Panc1 (cell line): ENCODE measurements at regions of chr7 and their contacts with region 1.

Region 1: DNA sequence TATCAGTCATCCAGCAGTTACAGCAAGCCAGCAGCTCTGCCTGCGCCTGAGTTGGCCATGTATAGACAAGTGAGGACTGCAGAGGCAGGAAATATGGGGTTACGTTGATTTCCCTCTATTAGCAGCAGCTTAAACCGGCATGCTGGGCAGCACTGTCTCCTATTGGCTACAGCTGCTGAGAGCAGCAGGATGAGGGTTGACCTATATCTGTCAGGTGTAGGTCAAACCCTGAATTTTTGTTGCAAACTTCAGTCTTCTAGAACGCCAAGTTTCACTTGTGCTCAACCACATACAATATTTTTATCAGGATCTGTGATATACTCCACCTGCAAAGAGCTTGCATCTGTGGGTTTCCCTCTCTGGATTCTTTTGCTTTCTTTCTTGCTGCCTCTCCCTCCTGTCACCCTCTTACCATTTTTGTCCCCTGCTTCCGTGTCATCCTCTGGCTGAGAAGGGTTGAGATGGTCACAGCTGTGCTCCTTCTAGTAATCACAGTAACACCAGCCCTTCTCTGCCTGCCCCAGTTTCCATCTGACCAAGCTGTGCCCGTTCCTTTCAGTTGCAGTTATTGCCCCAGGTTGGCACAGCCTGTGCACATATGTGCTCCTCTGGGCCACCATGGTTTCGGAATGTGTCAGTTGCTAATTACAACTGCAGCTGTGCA is 23.8 kb upstream of the GLCCI1 start:
- DNase-seq: no peak
- ATAC-seq: no peak
- H3K4me3 ChIP-seq: no peak overlapping the region
- H3K27ac ChIP-seq: no peak overlapping the region
- H3K4me1 ChIP-seq: no peaks in the 10 kb centered on the region
- H3K27me3 ChIP-seq: no peaks in the 10 kb centered on the region
- CTCF ChIP-seq: no peak

Region 2: GRCh38 chr7:7819442-7820247 is 125.1 kb before region 1 on chr7:
- CTCF ChIA-PET with region 1: no interaction called
- POLR2A ChIA-PET with region 1: no interaction called
- in situ Hi-C with region 1: no loop called
- intact Hi-C with region 1: no loop called
- DNase-seq: no peak
- ATAC-seq: no peak
- H3K4me3 ChIP-seq: no peak overlapping the region
- H3K27ac ChIP-seq: no peak overlapping the region
- H3K4me1 ChIP-seq: no peaks in the 10 kb centered on the region
- H3K27me3 ChIP-seq: no peaks in the 10 kb centered on the region
- CTCF ChIP-seq: no peak

Region 3: GRCh38 chr7:7883394-7883793 is 61.4 kb before region 1 on chr7:
- CTCF ChIA-PET with region 1: no interaction called
- POLR2A ChIA-PET with region 1: interaction called, 10 read pairs
- in situ Hi-C with region 1: no loop called
- intact Hi-C with region 1: no loop called
- DNase-seq: no peak
- ATAC-seq: no peak
- H3K4me3 ChIP-seq: no peak overlapping the region
- H3K27ac ChIP-seq: no peak overlapping the region
- H3K4me1 ChIP-seq: no peaks in the 10 kb centered on the region
- H3K27me3 ChIP-seq: no peaks in the 10 kb centered on the region
- CTCF ChIP-seq: no peak